ENCODE measurements at regions of chr1 and their contacts with region 1.

Region 1: GRCh38 chr1:176391621-176392020 is 71.4 kb upstream of the PAPPA2 start:
- DNase-seq: no peak
- H3K4me3 ChIP-seq: no peak overlapping the region
- CTCF ChIP-seq: no peak
- POLR2A ChIP-seq: no peak

Region 2: DNA sequence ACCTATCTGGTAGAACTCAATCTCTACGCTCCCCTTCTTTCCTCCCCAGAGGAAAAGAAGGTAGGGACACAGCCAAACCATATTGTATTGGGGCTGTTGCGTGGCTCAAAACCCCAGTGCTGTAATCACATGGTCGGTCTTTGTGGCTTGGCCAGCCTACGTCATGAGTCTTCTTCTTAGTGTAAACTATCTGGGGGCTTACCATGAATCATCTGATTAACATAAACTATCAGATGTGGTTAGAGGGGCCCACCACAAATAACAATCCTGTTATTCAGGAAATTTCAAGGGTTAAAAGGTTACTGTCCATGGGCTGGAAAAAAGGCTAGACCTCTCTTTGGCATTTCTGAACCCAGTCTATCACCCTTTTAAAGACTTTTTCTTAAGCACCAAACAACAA is 1993.4 kb before region 1 on chr1:
- intact Hi-C with region 1: loop called (anchors 10 kb)
- DNase-seq: no peak
- H3K4me3 ChIP-seq: no peak overlapping the region
- CTCF ChIP-seq: no peak
- POLR2A ChIP-seq: no peak

Region 3: DNA sequence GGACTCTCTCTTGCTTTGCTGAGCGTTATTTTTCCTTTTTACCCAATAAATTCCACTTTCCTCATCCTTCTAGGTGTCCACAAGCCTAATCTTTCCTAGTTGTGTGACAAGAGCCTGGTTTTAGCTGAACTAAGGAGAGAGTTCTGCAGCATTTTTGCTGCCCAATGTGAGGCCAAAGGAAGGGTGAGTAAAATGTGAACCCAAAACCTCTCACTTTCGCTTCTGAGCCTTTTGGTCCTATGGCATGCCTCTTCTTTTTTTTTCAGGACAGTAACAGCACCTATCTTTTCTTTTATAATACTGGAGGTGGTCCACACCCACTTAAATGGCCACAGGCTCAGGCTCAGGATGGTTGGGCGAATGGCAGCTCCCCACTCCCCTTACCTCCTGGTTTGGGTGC is 295.6 kb before region 1 on chr1:
- intact Hi-C with region 1: no loop called
- DNase-seq: no peak
- H3K4me3 ChIP-seq: no peak overlapping the region
- CTCF ChIP-seq: no peak
- POLR2A ChIP-seq: no peak